Natural killer cell (primary cell): ENCODE measurements at regions of chr1 and their contacts with region 1.

Region 1: GRCh38 chr1:230120926-230121381 is 53.9 kb downstream of the GALNT2 start:
- DNase-seq: peak in 1 of 2 donors; percentile 37
- ATAC-seq: no peak
- H3K4me3 ChIP-seq: no peak overlapping the region
- H3K4me3 Mint-ChIP-seq: no peak overlapping the region
- H3K27ac ChIP-seq: no peak overlapping the region
- H3K27ac Mint-ChIP-seq: peak overlapping the region in 1 of 2 donors; percentile 73
- H3K4me1 ChIP-seq: peaks cover 28% of the 10 kb centered on the region
- H3K4me1 Mint-ChIP-seq: peaks cover 71 to 77% of the 10 kb centered on the region in 2 donors
- H3K27me3 ChIP-seq: no peaks in the 10 kb centered on the region
- H3K27me3 Mint-ChIP-seq: no peaks in the 10 kb centered on the region
- CTCF ChIP-seq: peak; percentile 53

Region 2: GRCh38 chr1:230066466-230067404 is 54.2 kb before region 1 on chr1 and contains the start of gene GALNT2:
- intact Hi-C with region 1: loop called (anchors 5 kb)
- DNase-seq: peak; percentile 88 to 95
- ATAC-seq: peak; percentile 88 to 97 (median 90)
- H3K4me3 ChIP-seq: peak within 1 kb of the TSS; percentile 81
- H3K4me3 Mint-ChIP-seq: peak within 1 kb of the TSS; percentile 91
- H3K27ac ChIP-seq: peak within 1 kb of the TSS; percentile 86
- H3K27ac Mint-ChIP-seq: peak within 1 kb of the TSS; percentile 85 to 90
- H3K4me1 ChIP-seq: peaks cover 14% of the 10 kb centered on the region
- H3K4me1 Mint-ChIP-seq: peaks cover 31 to 33% of the 10 kb centered on the region in 2 donors
- H3K27me3 ChIP-seq: no peaks in the 10 kb centered on the region
- H3K27me3 Mint-ChIP-seq: peaks cover 0 to 4% of the 10 kb centered on the region in 2 donors
- CTCF ChIP-seq: no peak
- total RNA-seq, gene GALNT2: 31.2 to 53.6 (median 47.3) TPM